ENCODE measurements at regions of chr15 and their contacts with region 1.

Region 1: DNA sequence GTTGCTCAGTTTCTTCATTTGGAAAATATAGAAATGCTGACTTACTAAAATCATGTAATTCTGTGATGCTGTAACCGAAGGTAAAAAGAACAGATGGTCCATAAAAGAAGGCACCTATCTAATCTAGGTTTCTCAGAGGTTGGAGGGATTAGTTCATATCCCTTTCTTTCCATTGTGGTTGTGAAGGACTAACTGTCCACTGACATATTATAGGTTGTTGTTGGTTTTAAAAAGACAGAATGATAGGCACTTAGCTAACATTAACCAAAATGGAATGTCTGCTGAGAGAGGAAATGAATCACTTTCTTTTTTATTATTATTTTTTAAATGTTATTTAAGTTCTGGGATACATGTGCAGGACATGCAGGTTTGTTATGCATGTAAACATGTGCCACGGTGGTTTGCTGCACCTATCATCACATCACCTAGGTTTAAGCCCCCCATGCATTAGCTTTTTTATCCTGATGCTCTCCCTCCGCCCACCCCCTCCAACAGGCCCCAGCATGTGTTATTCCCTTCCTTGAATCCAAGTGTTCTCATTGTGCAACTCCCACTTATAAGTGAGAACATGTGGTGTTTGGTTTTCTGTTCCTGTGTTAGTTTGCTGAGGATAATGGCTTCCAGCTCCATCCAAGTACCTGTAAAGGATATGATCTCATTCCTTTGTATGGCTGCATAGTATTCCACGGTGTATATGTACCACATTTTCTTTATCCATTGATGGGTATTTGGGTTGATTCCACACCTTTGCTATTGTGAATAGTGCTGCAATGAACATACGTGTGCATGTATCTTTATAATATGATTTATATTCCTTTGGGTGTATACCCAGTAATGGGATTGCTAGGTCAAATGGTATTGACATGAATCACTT is 45.8 kb downstream of the ALDH1A2 start:
- DNase-seq: no peak
- H3K4me3 ChIP-seq: no peak overlapping the region
- CTCF ChIP-seq: no peak

Region 2: GRCh38 chr15:56918046-56918938 is 1101.4 kb before region 1 on chr15 and contains the start of gene TCF12:
- in situ Hi-C with region 1: no loop called
- DNase-seq: peak; percentile 90
- H3K4me3 ChIP-seq: peak within 1 kb of the TSS; percentile 81
- CTCF ChIP-seq: peak; percentile 39

Region 3: GRCh38 chr15:57849317-57849716 is 170.4 kb before region 1 on chr15:
- in situ Hi-C with region 1: no loop called
- DNase-seq: no peak
- H3K4me3 ChIP-seq: no peak overlapping the region
- CTCF ChIP-seq: no peak

Region 4: GRCh38 chr15:58115692-58116091 is 96.0 kb after region 1 on chr15:
- in situ Hi-C with region 1: loop called (anchors 25 kb)
- DNase-seq: no peak
- H3K4me3 ChIP-seq: no peak overlapping the region
- CTCF ChIP-seq: peak; percentile 11

Measured in astrocyte of the cerebellum (primary cell).